B cell (primary cell): ENCODE measurements at regions of chr19 and their contacts with region 1.

Region 1: GRCh38 chr19:1026189-1027019 is at the start of gene CNN2:
- DNase-seq: peak; percentile 81
- ATAC-seq: peak; percentile 57
- H3K4me3 ChIP-seq: peak within 1 kb of the TSS; percentile 60 to 99 (median 87)
- H3K4me3 Mint-ChIP-seq: peak within 1 kb of the TSS; percentile 94
- H3K27ac ChIP-seq: peak within 1 kb of the TSS; percentile 74 to 85
- H3K27ac Mint-ChIP-seq: peak within 1 kb of the TSS; percentile 91
- H3K4me1 ChIP-seq: peaks cover 16 to 37% of the 10 kb centered on the region in 2 donors
- H3K4me1 Mint-ChIP-seq: peaks cover 27% of the 10 kb centered on the region
- H3K27me3 ChIP-seq: no peaks in the 10 kb centered on the region
- H3K27me3 Mint-ChIP-seq: no peaks in the 10 kb centered on the region
- CTCF ChIP-seq: no peak
- total RNA-seq, gene CNN2: 186 and 198 TPM in 2 replicates

Region 2: DNA sequence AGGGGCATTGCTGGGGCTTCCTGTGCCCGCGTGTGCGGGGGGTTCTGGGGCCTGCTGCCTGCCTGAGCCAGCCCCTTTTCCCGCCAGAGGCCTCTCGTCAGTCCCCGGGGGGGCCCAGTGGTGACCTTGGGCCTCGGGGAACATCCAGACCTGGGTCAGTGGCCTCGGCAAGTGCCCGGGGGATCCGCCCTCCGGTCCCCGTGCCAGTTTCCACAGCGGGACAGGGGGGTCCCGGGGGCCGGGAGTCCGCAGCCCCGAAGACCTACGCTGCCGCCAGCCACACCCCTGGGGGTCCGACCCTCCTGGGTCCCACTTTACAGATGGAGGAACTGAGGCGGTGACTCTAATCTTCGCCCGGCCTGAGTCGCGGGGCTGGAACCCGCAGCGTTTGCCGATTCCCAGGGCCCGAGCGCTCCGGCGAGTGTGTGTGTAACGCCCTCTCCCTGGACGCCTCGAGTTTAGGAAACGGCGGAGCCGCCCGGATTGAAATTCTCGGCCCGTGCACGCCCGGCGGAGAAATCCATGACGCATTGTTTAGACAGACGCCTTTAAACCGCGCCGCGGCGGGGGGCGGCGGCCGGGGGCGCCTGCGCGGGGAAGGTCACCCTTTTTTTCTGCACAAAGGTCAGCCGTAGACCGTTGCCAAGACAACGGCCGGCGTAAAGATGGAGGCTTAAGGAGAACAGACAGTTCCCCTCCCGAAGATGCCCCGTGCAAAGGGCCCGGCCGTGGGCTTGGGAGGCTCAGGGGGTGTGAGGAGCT is 298.6 kb after region 1 on chr19:
- CTCF ChIA-PET with region 1: no interaction called
- POLR2A ChIA-PET with region 1: interaction called, 10 read pairs
- intact Hi-C with region 1: no loop called
- DNase-seq: peak; percentile 42
- ATAC-seq: no peak
- H3K4me3 ChIP-seq: peak overlapping the region in 4 of 5 experiments; percentile 8 to 33 (median 25)
- H3K4me3 Mint-ChIP-seq: peak overlapping the region; percentile 39
- H3K27ac ChIP-seq: no peak overlapping the region
- H3K27ac Mint-ChIP-seq: no peak overlapping the region
- H3K4me1 ChIP-seq: peaks cover 12 to 15% of the 10 kb centered on the region in 2 donors
- H3K4me1 Mint-ChIP-seq: peaks cover 2% of the 10 kb centered on the region
- H3K27me3 ChIP-seq: peaks cover 0 to 51% (median 22%) of the 10 kb centered on the region in 4 experiments
- H3K27me3 Mint-ChIP-seq: peaks cover 30% of the 10 kb centered on the region
- CTCF ChIP-seq: no peak